ENCODE measurements at regions of chr10 and their contacts with region 1.

Region 1: GRCh38 chr10:132654702-132655661 is 117.4 kb downstream of the INPP5A start:
- DNase-seq: peak; percentile 79
- ATAC-seq: peak; percentile 63

Region 2: GRCh38 chr10:132463333-132464252 is 191.4 kb before region 1 on chr10:
- intact Hi-C with region 1: no loop called
- DNase-seq: no peak
- ATAC-seq: peak; percentile 25

Region 3: DNA sequence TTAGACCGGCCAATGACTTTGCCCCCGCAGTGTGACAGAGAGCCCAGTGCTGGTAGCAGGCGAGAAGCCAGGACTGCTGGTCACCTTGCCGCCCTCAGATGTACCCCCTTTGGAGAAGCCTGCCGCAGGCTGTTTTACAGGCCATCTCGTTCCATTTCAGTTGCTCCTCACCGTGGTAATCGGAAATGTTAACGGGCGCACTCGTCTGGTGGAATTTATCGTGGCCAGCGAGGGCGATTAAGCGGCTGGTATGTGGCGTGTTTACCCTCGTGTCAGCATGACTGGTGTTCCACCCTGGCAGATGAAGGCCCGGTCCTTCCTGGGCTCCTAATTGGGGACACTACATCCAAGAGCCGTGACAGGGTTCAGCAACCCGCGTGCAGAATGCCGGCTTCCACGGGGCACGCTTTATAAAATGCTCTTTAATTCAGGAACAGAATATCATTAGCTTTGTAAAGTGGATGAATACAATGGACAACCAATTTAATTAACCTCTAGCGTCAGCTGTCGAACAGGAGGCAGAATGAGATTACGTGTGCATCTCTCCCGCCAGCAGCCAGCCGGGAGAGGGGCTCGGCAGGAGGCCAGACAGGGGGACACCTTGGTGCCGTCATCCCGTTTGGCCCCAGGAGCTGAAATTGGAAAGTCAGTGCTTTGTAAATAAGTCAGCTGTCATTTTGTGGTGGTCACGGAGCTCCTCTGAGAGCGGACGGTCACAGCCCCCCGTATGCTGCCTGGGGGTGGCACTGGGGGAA is 22.7 kb after region 1 on chr10:
- intact Hi-C with region 1: no loop called
- DNase-seq: peak; percentile 41
- ATAC-seq: no peak

Region 4: GRCh38 chr10:132714096-132714721 is 59.2 kb after region 1 on chr10:
- intact Hi-C with region 1: no loop called
- DNase-seq: peak; percentile 84
- ATAC-seq: peak; percentile 93

Region 5: GRCh38 chr10:132788180-132788830 is 133.3 kb after region 1 on chr10:
- intact Hi-C with region 1: loop called (anchors 5 kb)
- DNase-seq: no peak
- ATAC-seq: peak; percentile 31